ENCODE measurements at regions of chr16 and their contacts with region 1.

Region 1: GRCh38 chr16:85305996-85306792 is 193.9 kb upstream of the CIBAR2 start:
- DNase-seq: peak; percentile 95
- ATAC-seq: peak; percentile 94
- H3K4me3 Mint-ChIP-seq: no peak overlapping the region
- H3K27ac Mint-ChIP-seq: peak overlapping the region; percentile 89
- H3K4me1 Mint-ChIP-seq: peaks cover 55% of the 10 kb centered on the region
- H3K27me3 Mint-ChIP-seq: no peaks in the 10 kb centered on the region

Region 2: GRCh38 chr16:85055503-85056210 is 250.5 kb before region 1 on chr16:
- CTCF ChIA-PET with region 1: no interaction called
- POLR2A ChIA-PET with region 1: no interaction called
- intact Hi-C with region 1: loop called in 1 of 2 experiments (anchors 1 kb)
- DNase-seq: peak; percentile 88
- ATAC-seq: peak; percentile 92
- H3K4me3 Mint-ChIP-seq: peak overlapping the region; percentile 61
- H3K27ac Mint-ChIP-seq: peak overlapping the region; percentile 88
- H3K4me1 Mint-ChIP-seq: peaks cover 57% of the 10 kb centered on the region
- H3K27me3 Mint-ChIP-seq: no peaks in the 10 kb centered on the region

Region 3: DNA sequence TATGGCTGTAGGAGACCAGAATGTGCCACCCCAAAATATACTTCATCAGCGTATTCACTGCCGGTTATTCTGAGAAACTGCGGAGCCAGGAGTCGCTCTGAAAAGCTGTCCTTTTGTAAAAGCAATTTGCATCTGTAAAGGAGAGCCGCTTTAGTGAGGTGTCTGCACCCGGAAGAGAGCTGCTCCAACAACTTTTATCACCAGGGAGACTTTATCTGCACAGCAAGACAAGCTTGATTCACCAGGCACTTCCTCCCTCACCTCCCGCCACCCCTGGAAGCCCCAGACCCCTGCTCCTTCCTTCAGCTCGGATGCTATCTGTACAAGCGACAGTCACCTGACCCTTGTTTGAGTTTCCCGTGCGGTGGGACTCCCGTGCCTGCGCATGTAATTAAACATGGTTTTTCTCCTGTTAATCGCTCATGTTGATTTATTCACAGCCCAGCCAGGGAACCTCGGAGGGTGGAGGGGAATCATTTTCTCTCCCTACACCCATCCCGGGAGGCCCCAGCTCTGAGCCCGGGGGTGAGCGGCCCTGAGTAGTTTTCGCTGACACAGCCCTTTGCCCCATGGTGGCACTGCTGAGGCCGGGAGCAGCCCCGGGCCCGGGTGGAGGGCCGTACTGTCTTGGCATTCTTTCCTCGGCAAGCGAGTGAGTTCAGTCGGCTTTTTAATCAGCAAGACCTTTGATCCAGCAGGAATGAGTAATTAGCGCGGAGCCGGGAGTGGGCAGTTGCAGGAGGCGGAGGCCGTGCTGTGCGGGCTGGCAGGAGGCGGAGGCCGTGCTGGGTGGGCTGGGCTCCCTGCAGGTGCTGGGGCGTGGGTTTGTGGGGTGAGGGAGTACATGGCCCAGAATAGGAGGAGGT is 28.8 kb after region 1 on chr16:
- CTCF ChIA-PET with region 1: interaction called, 8 read pairs
- POLR2A ChIA-PET with region 1: no interaction called
- intact Hi-C with region 1: loop called in 1 of 2 experiments (anchors 2 kb)
- DNase-seq: peak; percentile 48
- ATAC-seq: peak; percentile 66
- H3K4me3 Mint-ChIP-seq: peak overlapping the region; percentile 45
- H3K27ac Mint-ChIP-seq: peak overlapping the region; percentile 47
- H3K4me1 Mint-ChIP-seq: peaks cover 14% of the 10 kb centered on the region
- H3K27me3 Mint-ChIP-seq: peaks cover 8% of the 10 kb centered on the region

Region 4: GRCh38 chr16:85354686-85355514 is 48.7 kb after region 1 on chr16:
- CTCF ChIA-PET with region 1: no interaction called
- POLR2A ChIA-PET with region 1: no interaction called
- intact Hi-C with region 1: no loop called
- DNase-seq: no peak
- ATAC-seq: peak; percentile 26
- H3K4me3 Mint-ChIP-seq: no peak overlapping the region
- H3K27ac Mint-ChIP-seq: no peak overlapping the region
- H3K4me1 Mint-ChIP-seq: no peaks in the 10 kb centered on the region
- H3K27me3 Mint-ChIP-seq: no peaks in the 10 kb centered on the region

Region 5: DNA sequence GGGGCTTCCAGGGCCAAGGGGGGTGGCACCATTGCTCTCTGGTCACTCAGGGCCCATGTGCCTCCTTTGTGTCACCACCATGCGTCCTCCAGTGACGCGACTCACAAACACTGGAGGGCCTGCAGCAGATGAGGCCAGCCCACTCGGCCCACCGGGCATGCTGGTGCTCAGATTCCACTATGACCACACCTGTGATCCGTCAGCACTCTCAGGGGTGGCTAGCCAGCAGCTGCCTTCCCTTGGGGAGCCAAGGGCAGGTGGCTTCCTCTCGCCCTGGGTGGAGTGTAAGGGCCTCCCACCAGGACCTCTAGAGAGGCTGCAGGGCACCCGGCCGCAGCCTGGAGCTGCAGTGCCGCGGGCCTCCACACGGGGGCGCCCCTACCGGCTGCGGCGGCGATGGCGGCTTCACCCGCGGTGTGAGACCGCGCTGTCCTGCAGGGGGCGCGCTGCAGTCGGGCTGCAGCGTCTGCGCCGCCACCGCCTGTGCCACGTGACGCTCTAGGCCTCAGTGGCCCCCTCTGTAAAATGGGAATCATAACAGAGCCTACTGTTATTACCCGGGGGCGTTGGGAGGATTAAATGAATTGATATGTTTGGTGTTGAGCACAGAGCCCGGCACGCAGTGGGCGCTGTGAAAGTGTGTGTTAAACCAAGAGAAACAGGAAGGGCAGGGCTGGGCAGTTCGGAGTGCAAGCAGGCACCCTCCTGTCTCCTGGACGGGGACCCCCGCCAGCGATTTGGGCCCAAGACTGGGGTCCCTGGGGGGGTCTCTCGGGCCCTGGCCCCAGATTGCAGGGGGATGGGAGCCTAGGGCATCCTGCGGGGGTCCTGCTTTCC is 114.5 kb after region 1 on chr16:
- CTCF ChIA-PET with region 1: interaction called, 5 read pairs
- POLR2A ChIA-PET with region 1: no interaction called
- intact Hi-C with region 1: loop called in 1 of 2 experiments (anchors 2 kb)
- DNase-seq: peak; percentile 89
- ATAC-seq: peak; percentile 76
- H3K4me3 Mint-ChIP-seq: no peak overlapping the region
- H3K27ac Mint-ChIP-seq: no peak overlapping the region
- H3K4me1 Mint-ChIP-seq: peaks cover 7% of the 10 kb centered on the region
- H3K27me3 Mint-ChIP-seq: no peaks in the 10 kb centered on the region

Region 6: GRCh38 chr16:85688586-85689284 is 382.5 kb after region 1 on chr16 and contains the start of gene GINS2:
- CTCF ChIA-PET with region 1: no interaction called
- POLR2A ChIA-PET with region 1: no interaction called
- intact Hi-C with region 1: loop called in 1 of 2 experiments (anchors 1 kb)
- DNase-seq: peak; percentile 96
- ATAC-seq: peak; percentile 100
- H3K4me3 Mint-ChIP-seq: peak within 1 kb of the TSS; percentile 88
- H3K27ac Mint-ChIP-seq: peak within 1 kb of the TSS; percentile 93
- H3K4me1 Mint-ChIP-seq: peaks cover 18% of the 10 kb centered on the region
- H3K27me3 Mint-ChIP-seq: peaks cover 4% of the 10 kb centered on the region
- total RNA-seq, gene GINS2: 86.4 to 87.5 TPM

Measured in activated CD4-positive, alpha-beta T cell treated with anti-CD3 and anti-CD28 coated beads for 36 hours (primary cell).